Activated T-helper 2 cell treated with anti-CD3 and anti-CD28 coated beads, Interferon-gamma antibody, Interleukin-2, Interleukin-4, amounts not matched to agents 10 μg/mL and 5 μg/mL and 100 μg/mL, durations not matched to agents 14 hours and 24 hours and 36 hours (primary cell): ENCODE measurements at regions of chr1 and their contacts with region 1.

Region 1: DNA sequence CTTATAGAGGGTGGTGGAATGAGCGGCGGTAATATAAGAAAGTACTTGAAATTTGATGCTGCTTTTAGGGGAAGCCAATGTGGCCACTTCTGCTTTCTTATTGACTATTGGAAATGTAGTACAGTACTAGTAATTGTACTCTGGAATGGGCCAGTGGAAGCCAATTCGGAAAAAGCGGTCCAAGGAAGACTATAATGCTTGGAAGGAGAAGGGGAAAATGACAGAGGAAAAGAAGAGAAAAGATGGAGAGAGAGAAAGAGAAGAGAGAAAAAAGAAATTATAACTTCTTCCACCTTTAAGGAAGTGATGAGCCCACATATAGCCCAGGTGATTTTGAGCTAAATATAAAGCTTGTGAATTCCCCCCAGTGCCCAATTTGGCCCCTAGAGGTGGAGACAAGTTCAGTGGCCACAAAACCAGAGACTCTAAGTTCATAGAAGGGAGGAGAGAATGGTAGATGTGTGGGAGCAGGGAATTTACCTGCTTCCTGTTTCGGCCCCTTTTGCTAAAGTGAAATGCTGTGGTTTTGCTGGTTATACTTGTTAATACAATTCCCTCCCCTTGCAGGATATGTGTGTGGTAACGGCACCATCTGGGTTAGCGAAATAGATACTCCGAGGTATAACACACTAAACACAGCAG is 35.7 kb upstream of the DUSP10 start:
- DNase-seq: peak; percentile 37
- H3K4me3 Mint-ChIP-seq: peak overlapping the region; percentile 48
- H3K27ac Mint-ChIP-seq: peak overlapping the region; percentile 92
- H3K4me1 Mint-ChIP-seq: peaks cover 78% of the 10 kb centered on the region
- H3K27me3 Mint-ChIP-seq: no peaks in the 10 kb centered on the region

Region 2: GRCh38 chr1:221741711-221742554 is 35.6 kb before region 1 on chr1 and contains the start of gene DUSP10:
- intact Hi-C with region 1: loop called (anchors 1 kb)
- DNase-seq: peak; percentile 99
- H3K4me3 Mint-ChIP-seq: no peak within 1 kb of the TSS
- H3K27ac Mint-ChIP-seq: peak within 1 kb of the TSS; percentile 78
- H3K4me1 Mint-ChIP-seq: peaks cover 33% of the 10 kb centered on the region
- H3K27me3 Mint-ChIP-seq: no peaks in the 10 kb centered on the region
- total RNA-seq, gene DUSP10: 21.0 and 21.7 TPM in 2 replicates

Region 3: GRCh38 chr1:221794079-221794670 is 16.6 kb after region 1 on chr1:
- intact Hi-C with region 1: loop called (anchors 1 kb)
- DNase-seq: no peak
- H3K4me3 Mint-ChIP-seq: peak overlapping the region; percentile 48
- H3K27ac Mint-ChIP-seq: peak overlapping the region; percentile 92
- H3K4me1 Mint-ChIP-seq: peaks cover 36% of the 10 kb centered on the region
- H3K27me3 Mint-ChIP-seq: no peaks in the 10 kb centered on the region

Region 4: GRCh38 chr1:221824025-221824424 is 46.5 kb after region 1 on chr1:
- intact Hi-C with region 1: loop called (anchors 1 kb)
- DNase-seq: no peak
- H3K4me3 Mint-ChIP-seq: no peak overlapping the region
- H3K27ac Mint-ChIP-seq: no peak overlapping the region
- H3K4me1 Mint-ChIP-seq: peaks cover 52% of the 10 kb centered on the region
- H3K27me3 Mint-ChIP-seq: peaks cover 4% of the 10 kb centered on the region

Region 5: DNA sequence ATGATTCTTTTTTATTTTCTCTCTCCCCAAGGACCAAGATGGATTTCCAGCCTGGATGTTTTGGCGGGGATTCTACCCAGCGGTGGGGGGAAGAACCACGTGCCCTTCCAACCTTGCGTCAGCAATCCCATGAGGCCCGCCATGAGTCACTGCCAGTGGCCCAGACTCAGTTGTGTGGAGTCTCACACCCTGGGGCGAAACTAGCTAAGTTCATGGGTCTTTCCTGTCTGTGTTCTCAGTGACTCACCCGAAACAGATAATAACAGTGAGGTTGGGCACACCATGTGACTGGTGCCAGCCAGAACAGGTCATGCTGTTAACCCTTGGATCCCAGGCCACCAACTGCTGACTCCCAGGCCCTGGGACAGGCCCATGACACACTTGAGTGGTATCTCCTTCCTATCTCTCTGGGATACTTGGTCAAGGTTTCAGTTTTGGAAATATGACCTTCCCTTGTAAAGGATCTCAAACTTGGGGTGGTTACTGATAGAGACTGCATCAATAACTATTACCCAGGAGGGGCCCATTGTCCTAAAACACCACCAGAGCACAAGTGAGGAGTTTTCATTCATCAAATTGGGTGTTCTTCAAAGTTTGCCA is 62.3 kb after region 1 on chr1:
- intact Hi-C with region 1: loop called (anchors 1 kb)
- DNase-seq: peak; percentile 33
- H3K4me3 Mint-ChIP-seq: no peak overlapping the region
- H3K27ac Mint-ChIP-seq: peak overlapping the region; percentile 60
- H3K4me1 Mint-ChIP-seq: peaks cover 48% of the 10 kb centered on the region
- H3K27me3 Mint-ChIP-seq: peaks cover 4% of the 10 kb centered on the region

Region 6: DNA sequence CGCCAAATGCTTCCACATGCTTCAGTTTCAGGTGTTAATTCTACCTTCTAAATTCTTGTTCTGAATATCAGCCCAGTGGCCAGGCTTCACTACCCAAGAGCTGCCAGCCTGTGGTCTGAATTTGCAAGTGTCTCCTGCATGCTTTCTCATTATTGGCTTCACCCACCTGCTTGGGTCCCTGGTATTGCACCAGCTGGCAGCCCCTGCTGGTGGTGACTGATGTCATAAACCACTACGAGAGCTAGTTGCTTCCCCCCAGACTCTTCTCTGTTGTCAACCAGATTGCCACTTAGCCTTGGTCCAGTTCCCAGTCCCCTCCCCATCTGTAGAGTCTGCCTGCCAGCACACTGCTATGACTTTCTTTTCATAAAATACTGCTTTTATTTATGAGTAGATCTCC is 162.1 kb after region 1 on chr1:
- intact Hi-C with region 1: no loop called
- DNase-seq: no peak
- H3K4me3 Mint-ChIP-seq: no peak overlapping the region
- H3K27ac Mint-ChIP-seq: no peak overlapping the region
- H3K4me1 Mint-ChIP-seq: no peaks in the 10 kb centered on the region
- H3K27me3 Mint-ChIP-seq: peaks cover 7% of the 10 kb centered on the region

Region 7: DNA sequence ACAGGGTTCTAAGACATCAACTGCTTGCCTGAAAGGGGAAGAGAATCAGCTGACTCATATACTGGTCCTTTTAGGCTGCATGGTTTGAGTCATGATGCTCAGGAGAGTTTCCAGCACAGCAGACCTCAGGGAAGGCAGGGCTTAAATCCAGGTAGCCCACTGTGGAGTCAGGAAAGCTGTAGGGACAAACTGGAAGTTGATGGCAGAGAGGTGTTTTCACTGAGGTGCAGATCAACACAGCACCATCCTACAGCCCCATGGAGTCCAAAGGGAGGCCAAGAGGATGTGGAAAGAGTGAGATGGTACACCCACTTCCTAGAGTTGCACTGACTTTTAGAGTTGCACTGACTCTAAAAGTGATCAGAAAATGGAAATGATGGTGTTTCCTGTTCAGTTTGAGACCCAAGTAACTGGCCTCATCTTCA is 216.7 kb after region 1 on chr1:
- intact Hi-C with region 1: loop called (anchors 2 kb)
- DNase-seq: peak; percentile 8
- H3K4me3 Mint-ChIP-seq: no peak overlapping the region
- H3K27ac Mint-ChIP-seq: peak overlapping the region; percentile 96
- H3K4me1 Mint-ChIP-seq: peaks cover 45% of the 10 kb centered on the region
- H3K27me3 Mint-ChIP-seq: no peaks in the 10 kb centered on the region